Panc1 (cell line): ENCODE measurements at regions of chr15 and their contacts with region 1.

Region 1: GRCh38 chr15:73927476-73928240 is 1.4 kb downstream of the LOXL1 start:
- DNase-seq: no peak
- ATAC-seq: peak; percentile 78
- H3K4me3 ChIP-seq: peak overlapping the region; percentile 43 to 60
- H3K27ac ChIP-seq: no peak overlapping the region; the same call in 1 of the 2 replicates
- H3K4me1 ChIP-seq: peaks cover 24% of the 10 kb centered on the region
- H3K27me3 ChIP-seq: no peaks in the 10 kb centered on the region
- CTCF ChIP-seq: peak; percentile 90

Region 2: GRCh38 chr15:73298522-73299245 is 629.0 kb before region 1 on chr15:
- CTCF ChIA-PET with region 1: interaction called, 13 read pairs
- POLR2A ChIA-PET with region 1: no interaction called
- in situ Hi-C with region 1: no loop called
- intact Hi-C with region 1: no loop called
- DNase-seq: no peak
- ATAC-seq: no peak
- H3K4me3 ChIP-seq: no peak overlapping the region
- H3K27ac ChIP-seq: no peak overlapping the region
- H3K4me1 ChIP-seq: no peaks in the 10 kb centered on the region
- H3K27me3 ChIP-seq: no peaks in the 10 kb centered on the region
- CTCF ChIP-seq: no peak

Region 3: GRCh38 chr15:74036271-74037170 is 108.9 kb after region 1 on chr15:
- CTCF ChIA-PET with region 1: no interaction called
- POLR2A ChIA-PET with region 1: no interaction called
- in situ Hi-C with region 1: no loop called
- intact Hi-C with region 1: no loop called
- DNase-seq: no peak
- ATAC-seq: peak; percentile 79
- H3K4me3 ChIP-seq: no peak overlapping the region
- H3K27ac ChIP-seq: no peak overlapping the region
- H3K4me1 ChIP-seq: no peaks in the 10 kb centered on the region
- H3K27me3 ChIP-seq: no peaks in the 10 kb centered on the region
- CTCF ChIP-seq: peak; percentile 81; the same call in 1 of the 2 replicates

Region 4: GRCh38 chr15:74235962-74236361 is 308.3 kb after region 1 on chr15 and contains the start of gene CCDC33:
- CTCF ChIA-PET with region 1: interaction called, 12 read pairs
- POLR2A ChIA-PET with region 1: no interaction called
- in situ Hi-C with region 1: no loop called
- intact Hi-C with region 1: no loop called
- DNase-seq: no peak
- ATAC-seq: no peak
- H3K4me3 ChIP-seq: no peak within 1 kb of the TSS
- H3K27ac ChIP-seq: no peak within 1 kb of the TSS
- H3K4me1 ChIP-seq: peaks cover 23% of the 10 kb centered on the region
- H3K27me3 ChIP-seq: no peaks in the 10 kb centered on the region
- CTCF ChIP-seq: no peak
- total RNA-seq, gene CCDC33: not detected